GM12878 (cell line): ENCODE measurements at regions of chr5 and their contacts with region 1.

Region 1: DNA sequence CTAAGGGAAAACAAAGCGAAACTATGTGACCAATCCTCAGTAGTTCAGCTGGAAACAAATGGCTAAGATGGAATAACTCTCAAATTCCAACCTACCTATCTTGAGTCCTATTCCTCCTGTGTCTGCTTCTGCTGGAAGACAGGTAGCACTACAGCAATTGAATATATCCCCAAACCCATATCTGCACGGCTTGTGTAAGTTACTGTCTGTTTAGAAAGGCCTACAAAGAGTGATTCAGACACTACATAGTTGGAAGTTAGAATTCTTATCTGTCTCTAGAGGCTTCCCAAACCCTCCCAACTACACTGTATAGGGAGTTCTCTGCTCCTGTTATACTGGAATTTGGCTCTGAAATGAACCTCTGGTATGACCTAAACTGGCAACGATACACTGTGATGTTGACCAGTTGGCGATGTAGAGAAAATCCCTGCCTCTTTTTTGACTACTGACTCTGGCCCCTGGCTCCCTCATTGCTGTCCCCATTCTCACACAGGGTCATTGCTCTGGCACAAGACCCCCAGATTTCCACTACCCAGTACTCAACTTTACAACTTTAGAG is 22.6 kb upstream of the NADK2 start:
- DNase-seq: no peak
- ATAC-seq: no peak
- H3K4me3 ChIP-seq: no peak overlapping the region
- H3K27ac ChIP-seq: no peak overlapping the region
- H3K4me1 ChIP-seq: no peaks in the 10 kb centered on the region
- H3K27me3 ChIP-seq: no peaks in the 10 kb centered on the region
- CTCF ChIP-seq: no peak
- EP300 ChIP-seq: no peak
- POLR2A ChIP-seq: no peak
- RAD21 ChIP-seq: no peak

Region 2: DNA sequence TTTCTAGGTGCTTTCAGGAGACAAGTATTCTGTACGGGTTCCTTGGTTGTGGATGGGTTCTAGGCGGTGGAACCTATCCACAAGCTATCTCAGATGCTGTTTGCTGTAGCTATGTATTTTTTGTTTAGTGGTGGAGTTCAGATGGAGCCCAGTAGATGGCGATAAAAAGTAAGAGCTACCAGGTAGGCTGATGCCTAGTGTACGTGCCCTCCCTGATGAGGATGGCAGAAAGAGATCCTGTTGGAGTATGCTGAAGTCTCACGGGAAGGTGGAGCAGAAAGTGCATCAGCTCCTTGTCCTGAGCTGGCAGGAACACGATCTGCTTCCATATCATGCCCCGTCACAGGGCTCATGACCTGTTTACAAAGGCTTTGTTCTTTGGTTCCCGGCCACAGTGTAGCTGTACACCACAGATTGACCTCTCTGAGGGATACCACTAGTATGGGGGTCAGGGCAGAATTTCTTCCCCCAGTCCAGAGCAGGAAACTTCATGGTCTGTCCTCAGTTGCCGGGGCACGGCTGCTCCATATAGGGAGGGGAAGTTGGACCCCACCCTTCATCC is 185.0 kb before region 1 on chr5:
- CTCF ChIA-PET with region 1: interaction called, 17 read pairs
- POLR2A ChIA-PET with region 1: no interaction called
- RAD21 ChIA-PET with region 1: interaction called, 8 read pairs
- SMC1A ChIA-PET with region 1: interaction called, 11 read pairs
- in situ Hi-C with region 1: no loop called
- intact Hi-C with region 1: no loop called
- DNase-seq: peak; percentile 11
- ATAC-seq: peak; percentile 99
- H3K4me3 ChIP-seq: no peak overlapping the region
- H3K27ac ChIP-seq: no peak overlapping the region
- H3K4me1 ChIP-seq: no peaks in the 10 kb centered on the region
- H3K27me3 ChIP-seq: no peaks in the 10 kb centered on the region
- CTCF ChIP-seq: peak; percentile 63 to 80 (median 70)
- EP300 ChIP-seq: no peak
- POLR2A ChIP-seq: no peak
- RAD21 ChIP-seq: peak; percentile 64

Region 3: DNA sequence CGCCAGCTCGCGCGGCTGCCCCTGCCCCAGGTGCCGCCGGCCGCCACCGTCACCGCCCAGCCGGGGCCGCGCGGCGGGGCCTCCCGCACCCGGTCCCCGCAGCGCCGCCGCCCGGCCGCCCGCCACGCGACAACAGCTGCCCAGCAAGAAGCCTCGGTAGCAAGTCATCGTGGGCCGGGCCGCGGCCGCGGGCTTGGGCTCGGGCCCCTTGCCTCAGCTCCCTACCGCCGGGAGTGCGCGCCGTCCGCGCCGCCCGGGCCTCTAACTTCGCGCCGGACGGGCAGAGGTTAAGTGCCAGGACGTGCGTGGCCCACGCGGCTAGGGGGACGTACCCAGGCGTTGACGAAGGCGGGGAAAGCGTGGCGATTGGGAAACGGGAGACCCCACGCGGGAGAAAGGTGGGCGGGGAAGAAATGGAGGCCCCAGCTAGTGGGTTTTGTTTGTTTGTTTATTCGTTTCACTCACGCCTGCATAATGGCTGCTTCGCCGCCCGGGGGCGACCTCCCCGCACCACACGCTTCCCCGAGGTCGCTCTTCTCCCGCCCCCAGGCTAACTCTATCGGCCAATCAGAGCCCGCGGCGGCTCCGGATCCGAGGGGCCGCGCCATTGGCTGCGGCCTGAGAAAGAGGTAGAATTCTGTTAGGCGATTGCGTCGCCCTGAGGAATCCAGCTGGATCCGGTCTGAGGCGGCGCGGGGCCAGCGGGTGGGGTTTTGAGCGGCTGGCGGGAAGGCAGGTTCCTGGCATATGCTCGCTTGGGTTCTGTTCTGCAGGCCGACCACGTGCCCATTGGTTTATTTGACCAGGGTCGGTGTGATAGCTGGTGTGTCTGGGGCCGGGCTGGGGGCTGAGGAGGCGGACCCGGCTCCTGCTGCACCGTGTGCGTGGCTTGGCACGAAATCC is 22.4 kb before region 1 on chr5 and contains the start of gene NADK2:
- CTCF ChIA-PET with region 1: interaction called, 47 read pairs
- POLR2A ChIA-PET with region 1: no interaction called
- RAD21 ChIA-PET with region 1: no interaction called
- SMC1A ChIA-PET with region 1: interaction called, 8 read pairs
- in situ Hi-C with region 1: no loop called
- intact Hi-C with region 1: no loop called
- DNase-seq: peak; percentile 61
- ATAC-seq: peak; percentile 92
- H3K4me3 ChIP-seq: peak within 1 kb of the TSS; percentile 97
- H3K27ac ChIP-seq: peak within 1 kb of the TSS; percentile 59
- H3K4me1 ChIP-seq: peaks cover 19% of the 10 kb centered on the region
- H3K27me3 ChIP-seq: no peaks in the 10 kb centered on the region
- CTCF ChIP-seq: peak; percentile 69 to 74 (median 73)
- EP300 ChIP-seq: no peak
- POLR2A ChIP-seq: peak; percentile 71
- RAD21 ChIP-seq: peak; percentile 40; the same call in 1 of the 2 replicates
- polyA plus RNA-seq, gene NADK2: 2.4 to 3.1 TPM

Region 4: GRCh38 chr5:36279054-36279698 is 14.9 kb after region 1 on chr5:
- CTCF ChIA-PET with region 1: interaction called, 21 read pairs
- POLR2A ChIA-PET with region 1: no interaction called
- RAD21 ChIA-PET with region 1: interaction called, 3 read pairs
- SMC1A ChIA-PET with region 1: interaction called, 5 read pairs
- in situ Hi-C with region 1: no loop called
- intact Hi-C with region 1: no loop called
- DNase-seq: no peak
- ATAC-seq: no peak; the same call in 2 of the 3 replicates
- H3K4me3 ChIP-seq: no peak overlapping the region
- H3K27ac ChIP-seq: no peak overlapping the region
- H3K4me1 ChIP-seq: no peaks in the 10 kb centered on the region
- H3K27me3 ChIP-seq: no peaks in the 10 kb centered on the region
- CTCF ChIP-seq: no peak
- EP300 ChIP-seq: no peak
- POLR2A ChIP-seq: no peak
- RAD21 ChIP-seq: no peak

Region 5: DNA sequence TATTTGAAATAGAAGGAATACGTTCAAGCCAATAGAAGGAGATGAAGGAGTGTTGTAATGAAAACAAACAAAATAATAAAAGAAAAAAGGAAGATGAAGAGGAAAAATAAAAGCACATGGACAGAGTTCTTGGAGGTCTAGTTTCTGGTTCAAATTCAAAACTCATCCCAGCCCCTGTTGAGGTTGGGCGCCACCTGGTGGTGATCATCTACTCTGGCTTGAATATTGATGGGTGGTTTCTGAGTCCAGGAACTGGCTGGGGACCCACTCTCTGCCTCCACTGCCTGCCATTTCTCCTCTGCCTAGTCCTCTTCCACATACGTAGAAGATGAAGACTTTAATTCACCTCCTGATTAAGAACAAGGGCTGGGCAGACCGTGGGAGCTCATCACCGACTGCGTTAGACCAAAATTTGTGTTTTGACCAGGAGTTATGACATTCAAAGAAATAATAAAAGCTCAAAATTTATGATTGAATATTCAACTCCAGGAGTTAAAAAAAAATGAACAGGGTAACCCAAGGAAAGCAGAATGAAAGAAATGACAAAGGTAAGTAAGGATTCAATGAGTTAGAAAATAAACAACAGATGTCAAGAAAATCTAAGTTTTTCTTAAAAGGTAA is 243.2 kb after region 1 on chr5:
- CTCF ChIA-PET with region 1: interaction called, 6 read pairs
- POLR2A ChIA-PET with region 1: no interaction called
- RAD21 ChIA-PET with region 1: interaction called, 5 read pairs
- SMC1A ChIA-PET with region 1: interaction called, 3 read pairs
- in situ Hi-C with region 1: no loop called
- intact Hi-C with region 1: loop called (anchors 1 kb)
- DNase-seq: peak; percentile 3
- ATAC-seq: peak; percentile 90
- H3K4me3 ChIP-seq: no peak overlapping the region
- H3K27ac ChIP-seq: no peak overlapping the region
- H3K4me1 ChIP-seq: no peaks in the 10 kb centered on the region
- H3K27me3 ChIP-seq: no peaks in the 10 kb centered on the region
- CTCF ChIP-seq: peak; percentile 69 to 77 (median 71)
- EP300 ChIP-seq: no peak
- POLR2A ChIP-seq: no peak
- RAD21 ChIP-seq: peak; percentile 80

Region 6: GRCh38 chr5:36614657-36615308 is 350.5 kb after region 1 on chr5:
- CTCF ChIA-PET with region 1: no interaction called
- POLR2A ChIA-PET with region 1: no interaction called
- RAD21 ChIA-PET with region 1: no interaction called
- SMC1A ChIA-PET with region 1: no interaction called
- in situ Hi-C with region 1: no loop called
- intact Hi-C with region 1: no loop called
- DNase-seq: no peak
- ATAC-seq: no peak
- H3K4me3 ChIP-seq: no peak overlapping the region
- H3K27ac ChIP-seq: no peak overlapping the region
- H3K4me1 ChIP-seq: no peaks in the 10 kb centered on the region
- H3K27me3 ChIP-seq: peaks cover 0 to 2% of the 10 kb centered on the region in 2 experiments; a peak in 1 of 4 replicates
- CTCF ChIP-seq: no peak
- EP300 ChIP-seq: no peak
- POLR2A ChIP-seq: no peak
- RAD21 ChIP-seq: no peak